Activated T-helper 2 cell treated with anti-CD3 and anti-CD28 coated beads, Interferon-gamma antibody, Interleukin-2, Interleukin-4, amounts not matched to agents 10 μg/mL and 5 μg/mL and 100 μg/mL, durations not matched to agents 14 hours and 24 hours and 36 hours (primary cell): ENCODE measurements at regions of chr10 and their contacts with region 1.

Region 1: DNA sequence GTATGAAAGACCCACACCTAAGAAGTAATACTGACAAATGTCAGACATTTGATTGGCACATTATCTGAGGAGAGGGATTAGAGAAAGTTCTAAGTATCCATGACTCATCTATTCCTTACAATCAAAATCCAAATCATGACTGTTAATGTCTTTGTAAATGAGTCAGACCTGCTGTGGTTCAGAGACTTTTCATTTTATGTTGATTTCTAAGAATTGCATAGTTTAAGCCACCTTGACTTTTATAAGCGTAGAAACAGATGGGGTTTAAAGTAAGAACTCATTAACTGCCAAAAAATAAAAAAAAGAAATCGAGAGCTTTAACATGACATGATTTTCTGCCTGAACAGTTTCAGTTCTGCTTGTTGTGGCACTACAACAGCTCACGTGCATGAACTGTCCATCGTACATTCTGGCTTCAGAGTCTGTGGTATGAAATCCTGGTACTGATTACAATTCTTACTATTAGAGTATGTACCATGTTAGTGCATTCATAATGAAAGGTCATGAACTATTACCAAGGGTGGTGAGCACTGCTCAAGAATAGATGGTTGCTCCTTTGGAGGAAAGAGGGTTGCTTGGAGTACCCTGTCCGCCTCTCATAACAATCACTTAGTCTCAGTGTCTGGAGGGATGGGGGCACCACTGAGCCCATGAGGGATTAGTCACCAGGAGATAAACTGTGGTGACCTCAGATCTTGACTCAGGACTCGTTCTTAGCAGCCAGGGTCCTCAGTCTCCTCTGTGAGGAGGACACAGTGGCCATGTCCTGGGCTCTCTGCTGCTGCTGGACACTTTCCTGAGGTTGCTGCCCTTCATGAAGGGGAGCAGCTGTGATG is 42.2 kb downstream of the ACSM6 start:
- DNase-seq: no peak
- H3K4me3 Mint-ChIP-seq: peak overlapping the region; percentile 15
- H3K27ac Mint-ChIP-seq: peak overlapping the region; percentile 80
- H3K4me1 Mint-ChIP-seq: peaks cover 49% of the 10 kb centered on the region
- H3K27me3 Mint-ChIP-seq: no peaks in the 10 kb centered on the region

Region 2: DNA sequence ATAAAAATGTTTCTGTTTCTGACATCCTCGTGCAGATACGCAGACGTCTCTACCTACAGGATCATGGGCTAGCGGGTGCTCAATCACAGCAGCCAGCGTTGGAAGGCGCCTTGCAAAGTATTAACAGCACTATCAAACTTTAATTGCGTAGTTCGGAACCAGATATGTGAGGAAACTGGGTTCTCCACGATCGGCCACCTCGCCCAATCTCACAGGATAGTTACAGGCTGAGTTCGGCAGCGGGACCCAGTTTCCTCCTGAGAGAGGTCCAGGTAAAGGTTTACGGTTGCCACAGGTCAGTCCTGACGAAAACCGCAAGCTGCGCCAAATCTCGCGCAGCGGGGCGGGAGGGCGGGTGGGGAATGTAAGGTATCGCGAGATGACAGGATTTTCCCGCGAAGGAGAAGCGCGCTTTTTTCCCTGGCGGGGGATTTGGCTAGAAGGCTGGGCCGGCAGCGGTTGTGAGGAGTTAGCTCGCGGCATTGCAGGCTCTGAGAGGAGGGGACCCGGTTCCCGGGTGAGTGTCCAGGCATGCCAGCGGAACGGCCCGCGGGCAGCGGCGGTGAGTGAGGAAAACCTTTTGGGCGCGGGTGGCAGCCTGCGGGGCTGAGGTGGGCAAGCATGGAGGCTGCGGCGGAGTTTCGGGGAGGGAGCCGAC is 690.8 kb before region 1 on chr10 and contains the start of gene HELLS:
- intact Hi-C with region 1: loop called (anchors 5 kb)
- DNase-seq: peak; percentile 76
- H3K4me3 Mint-ChIP-seq: peak within 1 kb of the TSS; percentile 99
- H3K27ac Mint-ChIP-seq: peak within 1 kb of the TSS; percentile 98
- H3K4me1 Mint-ChIP-seq: peaks cover 35% of the 10 kb centered on the region
- H3K27me3 Mint-ChIP-seq: peaks cover 5% of the 10 kb centered on the region
- total RNA-seq, gene HELLS: 224 and 230 TPM in 2 replicates

Region 3: DNA sequence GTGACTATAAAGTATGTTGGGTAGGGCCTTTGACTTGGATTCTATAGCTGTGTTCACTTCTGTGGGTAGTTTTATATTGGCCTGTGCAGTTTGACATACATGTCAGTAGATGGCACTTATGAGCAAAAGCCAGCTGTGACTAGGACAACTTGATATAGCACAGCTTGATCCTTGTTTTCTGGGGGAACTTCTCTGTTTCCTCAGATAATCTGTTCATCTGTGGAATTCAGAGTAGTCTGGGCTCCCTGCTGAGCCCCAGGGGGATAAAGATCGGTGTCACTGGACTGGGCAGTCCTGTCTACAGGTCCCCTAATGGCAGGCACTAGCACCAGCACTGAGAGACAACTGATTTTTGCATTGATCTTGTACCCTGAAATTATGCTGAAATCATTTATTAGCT is 272.4 kb before region 1 on chr10:
- intact Hi-C with region 1: no loop called
- DNase-seq: no peak
- H3K4me3 Mint-ChIP-seq: no peak overlapping the region
- H3K27ac Mint-ChIP-seq: no peak overlapping the region
- H3K4me1 Mint-ChIP-seq: no peaks in the 10 kb centered on the region
- H3K27me3 Mint-ChIP-seq: no peaks in the 10 kb centered on the region

Region 4: GRCh38 chr10:95183271-95184230 is 52.7 kb before region 1 on chr10:
- intact Hi-C with region 1: loop called (anchors 2 kb)
- DNase-seq: peak; percentile 76
- H3K4me3 Mint-ChIP-seq: peak overlapping the region; percentile 79
- H3K27ac Mint-ChIP-seq: peak overlapping the region; percentile 43
- H3K4me1 Mint-ChIP-seq: peaks cover 6% of the 10 kb centered on the region
- H3K27me3 Mint-ChIP-seq: peaks cover 40% of the 10 kb centered on the region

Region 5: DNA sequence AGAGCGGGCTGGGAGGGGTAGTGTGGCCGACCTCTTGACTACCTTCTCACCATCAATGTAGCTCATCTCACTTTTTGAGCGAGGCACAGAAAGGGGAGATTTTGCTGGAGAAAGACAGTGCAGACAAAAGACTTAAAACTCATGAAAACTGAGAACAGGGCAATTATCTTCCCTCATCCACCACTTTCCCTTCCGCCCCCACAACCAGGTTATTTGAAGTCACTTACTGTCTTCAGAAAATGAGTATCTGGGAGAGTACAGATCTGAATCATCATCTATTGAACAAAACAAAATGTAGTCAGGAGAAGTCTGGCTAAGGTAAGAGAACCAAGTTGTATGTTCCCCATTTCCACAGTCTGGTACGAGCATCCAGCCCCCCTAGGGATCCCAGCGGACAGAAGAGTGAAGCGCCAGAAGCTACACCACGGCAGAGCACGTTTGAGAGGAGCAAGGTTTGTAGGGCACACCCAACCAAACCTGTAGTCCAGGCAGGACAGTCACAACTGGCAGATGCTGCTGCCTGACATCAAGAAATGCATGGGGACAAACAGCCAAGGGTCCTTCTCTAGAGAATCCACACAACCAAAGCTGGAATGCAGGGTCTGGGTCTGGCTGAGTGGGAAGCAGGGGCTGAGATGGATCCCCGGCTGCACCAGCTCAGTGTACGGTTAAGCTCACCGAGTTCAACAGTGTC is 147.9 kb after region 1 on chr10:
- intact Hi-C with region 1: loop called (anchors 1 kb)
- DNase-seq: no peak
- H3K4me3 Mint-ChIP-seq: no peak overlapping the region
- H3K27ac Mint-ChIP-seq: no peak overlapping the region
- H3K4me1 Mint-ChIP-seq: peaks cover 6% of the 10 kb centered on the region
- H3K27me3 Mint-ChIP-seq: peaks cover 28% of the 10 kb centered on the region